ENCODE measurements at regions of chr18 and their contacts with region 1.

Region 1: DNA sequence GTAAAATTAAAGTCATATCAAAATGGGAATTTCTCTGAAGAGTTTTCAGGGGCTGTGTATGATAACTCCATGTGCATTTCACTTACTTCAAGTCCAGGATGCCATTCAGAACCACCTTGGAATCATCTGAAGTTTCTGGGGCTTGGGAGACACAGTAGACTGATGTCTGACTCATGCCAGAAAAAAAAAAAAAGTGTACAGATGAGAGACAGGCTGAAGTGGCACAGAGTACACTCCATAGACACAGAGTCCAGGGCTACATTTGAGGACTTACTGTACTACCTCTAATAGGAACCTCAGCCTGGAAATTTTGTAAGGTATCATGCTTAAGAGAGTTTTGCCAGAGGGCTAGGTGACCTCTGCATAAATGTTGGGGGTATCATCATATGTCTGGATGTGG is 92.0 kb downstream of the SS18 start:
- DNase-seq: no peak
- H3K4me3 ChIP-seq: no peak overlapping the region
- H3K27ac ChIP-seq: no peak overlapping the region
- H3K27me3 ChIP-seq: no peaks in the 10 kb centered on the region
- CTCF ChIP-seq: no peak

Region 2: DNA sequence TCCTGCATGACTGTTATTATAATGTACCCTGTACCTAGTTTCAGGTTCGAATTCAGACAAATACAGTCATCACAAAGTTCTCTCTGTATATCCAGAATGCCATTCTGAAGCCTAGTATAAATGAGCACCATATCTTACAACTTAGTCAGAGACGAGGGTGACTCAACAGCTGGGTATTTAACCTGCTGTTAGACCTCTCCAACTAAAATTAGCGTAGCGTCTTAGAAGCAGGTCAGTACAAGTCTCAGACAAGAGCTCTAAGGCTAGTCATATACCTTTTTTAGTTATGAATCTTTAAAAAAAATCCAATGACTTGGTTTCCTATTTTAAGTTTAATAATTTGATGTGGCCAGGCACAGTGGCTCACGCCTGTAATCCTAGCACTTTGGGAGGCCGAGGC is 1785.5 kb before region 1 on chr18:
- CTCF ChIA-PET with region 1: no interaction called
- POLR2A ChIA-PET with region 1: interaction called, 10 read pairs
- DNase-seq: peak; percentile 73
- H3K4me3 ChIP-seq: no peak overlapping the region
- H3K27ac ChIP-seq: no peak overlapping the region
- H3K27me3 ChIP-seq: no peaks in the 10 kb centered on the region
- CTCF ChIP-seq: no peak